H1 (cell line): ENCODE measurements at regions of chr12 and their contacts with region 1.

Region 1: GRCh38 chr12:46933947-46934346 is 108.2 kb upstream of the SLC38A4 start:
- DNase-seq: no peak
- H3K4me3 ChIP-seq: no peak overlapping the region
- H3K27ac ChIP-seq: no peak overlapping the region
- H3K4me1 ChIP-seq: no peaks in the 10 kb centered on the region
- H3K27me3 ChIP-seq: no peaks in the 10 kb centered on the region
- CTCF ChIP-seq: peak in 2 of 3 experiments; percentile 35 to 57; a peak in 2 of 4 replicates
- EP300 ChIP-seq: no peak
- POLR2A ChIP-seq: no peak
- RAD21 ChIP-seq: peak; percentile 79 to 81

Region 2: DNA sequence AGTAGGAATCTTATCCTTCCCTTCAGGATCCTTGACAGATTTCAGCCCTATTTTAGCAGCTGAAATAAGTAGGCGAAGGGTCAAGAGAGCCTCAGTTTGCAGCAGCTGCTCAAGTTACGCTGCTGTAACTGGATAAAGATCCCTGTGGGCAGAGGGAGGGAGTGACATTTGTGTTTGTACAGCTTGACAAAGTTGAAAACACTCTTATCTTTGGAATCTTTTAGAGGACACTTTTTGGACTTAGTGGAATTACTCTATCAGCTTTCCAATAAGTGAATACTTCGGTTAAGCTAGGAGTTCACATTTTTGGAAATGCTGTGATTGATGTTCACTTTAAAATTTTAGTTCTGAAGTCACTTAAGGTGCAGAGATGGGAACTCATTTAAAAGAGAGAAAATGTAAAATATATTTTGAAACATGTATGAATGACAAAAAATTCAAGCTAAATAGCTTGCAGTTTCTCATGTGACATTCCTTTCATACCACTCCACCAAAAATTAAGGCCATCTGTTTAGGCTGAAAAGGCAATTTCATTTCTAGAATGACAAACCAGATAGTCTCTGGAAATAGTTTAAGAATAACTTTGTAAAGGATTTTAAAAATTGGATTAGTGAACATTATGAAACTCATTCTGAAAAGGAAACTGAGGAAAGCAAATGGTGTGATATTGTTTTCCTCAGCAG is 163.3 kb before region 1 on chr12:
- CTCF ChIA-PET with region 1: interaction called, 11 read pairs
- POLR2A ChIA-PET with region 1: no interaction called
- DNase-seq: no peak
- H3K4me3 ChIP-seq: no peak overlapping the region; a peak in 1 of 8 replicates
- H3K27ac ChIP-seq: no peak overlapping the region
- H3K4me1 ChIP-seq: peaks cover 0 to 12% (median 3%) of the 10 kb centered on the region in 4 experiments; a peak in 4 of 7 replicates
- H3K27me3 ChIP-seq: no peaks in the 10 kb centered on the region
- CTCF ChIP-seq: no peak
- EP300 ChIP-seq: no peak
- POLR2A ChIP-seq: no peak
- RAD21 ChIP-seq: no peak

Region 3: GRCh38 chr12:46904406-46905238 is 29.3 kb before region 1 on chr12:
- CTCF ChIA-PET with region 1: no interaction called
- POLR2A ChIA-PET with region 1: no interaction called
- DNase-seq: no peak
- H3K4me3 ChIP-seq: no peak overlapping the region
- H3K27ac ChIP-seq: no peak overlapping the region
- H3K4me1 ChIP-seq: no peaks in the 10 kb centered on the region
- H3K27me3 ChIP-seq: no peaks in the 10 kb centered on the region
- CTCF ChIP-seq: no peak
- EP300 ChIP-seq: no peak
- POLR2A ChIP-seq: no peak
- RAD21 ChIP-seq: no peak; a peak in 1 of 4 replicates

Region 4: GRCh38 chr12:46915082-46915481 is 18.9 kb before region 1 on chr12:
- CTCF ChIA-PET with region 1: no interaction called
- POLR2A ChIA-PET with region 1: no interaction called
- DNase-seq: no peak
- H3K4me3 ChIP-seq: no peak overlapping the region
- H3K27ac ChIP-seq: no peak overlapping the region
- H3K4me1 ChIP-seq: no peaks in the 10 kb centered on the region
- H3K27me3 ChIP-seq: no peaks in the 10 kb centered on the region
- CTCF ChIP-seq: no peak
- EP300 ChIP-seq: no peak
- POLR2A ChIP-seq: no peak
- RAD21 ChIP-seq: no peak

Region 5: GRCh38 chr12:46944088-46944487 is 10.1 kb after region 1 on chr12:
- CTCF ChIA-PET with region 1: interaction called, 22 read pairs
- POLR2A ChIA-PET with region 1: no interaction called
- DNase-seq: no peak
- H3K4me3 ChIP-seq: no peak overlapping the region
- H3K27ac ChIP-seq: no peak overlapping the region
- H3K4me1 ChIP-seq: no peaks in the 10 kb centered on the region
- H3K27me3 ChIP-seq: no peaks in the 10 kb centered on the region
- CTCF ChIP-seq: peak in 1 of 3 experiments; percentile 10; a peak in 1 of 4 replicates
- EP300 ChIP-seq: no peak
- POLR2A ChIP-seq: no peak
- RAD21 ChIP-seq: peak in 1 of 2 experiments; percentile 10; a peak in 1 of 4 replicates